ENCODE measurements at regions of chr9 and their contacts with region 1.

Region 1: GRCh38 chr9:38620483-38621433 is at the start of gene ANKRD18A:
- DNase-seq: peak; percentile 73 to 96
- ATAC-seq: peak; percentile 83 to 89
- H3K4me3 ChIP-seq: peak within 1 kb of the TSS; percentile 53
- H3K27ac ChIP-seq: peak within 1 kb of the TSS; percentile 93
- H3K4me1 ChIP-seq: peaks cover 9% of the 10 kb centered on the region; the same call in 2 of the 3 replicates
- CTCF ChIP-seq: peak; percentile 74
- EP300 ChIP-seq: no peak
- POLR2A ChIP-seq: peak; percentile 51
- RAD21 ChIP-seq: peak; percentile 65 to 79
- polyA plus RNA-seq, gene ANKRD18A: 15.9 and 20.7 TPM in 2 replicates

Region 2: GRCh38 chr9:38671748-38672147 is 51.0 kb after region 1 on chr9:
- CTCF ChIA-PET with region 1: interaction called, 15 read pairs
- POLR2A ChIA-PET with region 1: interaction called, 3 read pairs
- DNase-seq: no peak
- ATAC-seq: no peak
- H3K4me3 ChIP-seq: peak overlapping the region; percentile 28; the same call in 2 of the 3 replicates
- H3K27ac ChIP-seq: peak overlapping the region; percentile 73 to 75
- H3K4me1 ChIP-seq: peaks cover 18% of the 10 kb centered on the region
- CTCF ChIP-seq: no peak
- EP300 ChIP-seq: no peak
- POLR2A ChIP-seq: no peak
- RAD21 ChIP-seq: no peak

Region 3: DNA sequence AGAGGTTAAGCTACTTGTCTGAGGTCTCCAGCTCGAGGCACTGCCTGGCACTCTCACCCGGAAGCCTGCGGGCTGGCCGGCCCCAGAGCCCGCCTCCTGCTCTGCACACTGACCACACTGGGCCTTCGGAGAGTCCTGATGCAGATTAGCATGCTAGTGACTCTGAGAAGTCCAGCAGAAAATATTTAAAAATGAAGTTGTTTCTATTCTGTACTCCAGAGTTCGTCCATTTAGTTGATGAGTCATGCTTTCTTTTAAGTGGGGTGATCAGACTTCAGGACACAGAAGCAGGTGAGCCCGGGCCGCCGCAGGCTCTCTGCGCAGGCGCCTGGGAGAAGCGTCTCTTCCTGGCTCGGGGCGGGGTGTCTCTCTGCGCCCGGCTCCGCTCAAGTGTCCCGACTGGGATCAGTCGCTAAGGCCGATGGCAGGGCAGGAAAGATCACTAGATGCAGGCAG is 66.7 kb after region 1 on chr9:
- CTCF ChIA-PET with region 1: interaction called, 11 read pairs
- POLR2A ChIA-PET with region 1: interaction called, 5 read pairs
- DNase-seq: peak; percentile 58 to 71
- ATAC-seq: peak; percentile 76 to 84
- H3K4me3 ChIP-seq: peak overlapping the region; percentile 27
- H3K27ac ChIP-seq: peak overlapping the region; percentile 79 to 88
- H3K4me1 ChIP-seq: peaks cover 55% of the 10 kb centered on the region
- CTCF ChIP-seq: no peak
- EP300 ChIP-seq: no peak
- POLR2A ChIP-seq: 0 out of 2 replicates have a peak, but pooled peaks have one; percentile 21
- RAD21 ChIP-seq: no peak